Activated T-helper 1 cell treated with anti-CD3 and anti-CD28 coated beads, Interleukin-12 subunit alpha, Interleukin-12 subunit beta, Interleukin-2, Interleukin-4 antibody, amounts not matched to agents 30 ng/mL and 10 ng/mL and 1 ng/mL, durations not matched to agents 14 hours and 24 hours and 36 hours (primary cell): ENCODE measurements at regions of chr22 and their contacts with region 1.

Region 1: DNA sequence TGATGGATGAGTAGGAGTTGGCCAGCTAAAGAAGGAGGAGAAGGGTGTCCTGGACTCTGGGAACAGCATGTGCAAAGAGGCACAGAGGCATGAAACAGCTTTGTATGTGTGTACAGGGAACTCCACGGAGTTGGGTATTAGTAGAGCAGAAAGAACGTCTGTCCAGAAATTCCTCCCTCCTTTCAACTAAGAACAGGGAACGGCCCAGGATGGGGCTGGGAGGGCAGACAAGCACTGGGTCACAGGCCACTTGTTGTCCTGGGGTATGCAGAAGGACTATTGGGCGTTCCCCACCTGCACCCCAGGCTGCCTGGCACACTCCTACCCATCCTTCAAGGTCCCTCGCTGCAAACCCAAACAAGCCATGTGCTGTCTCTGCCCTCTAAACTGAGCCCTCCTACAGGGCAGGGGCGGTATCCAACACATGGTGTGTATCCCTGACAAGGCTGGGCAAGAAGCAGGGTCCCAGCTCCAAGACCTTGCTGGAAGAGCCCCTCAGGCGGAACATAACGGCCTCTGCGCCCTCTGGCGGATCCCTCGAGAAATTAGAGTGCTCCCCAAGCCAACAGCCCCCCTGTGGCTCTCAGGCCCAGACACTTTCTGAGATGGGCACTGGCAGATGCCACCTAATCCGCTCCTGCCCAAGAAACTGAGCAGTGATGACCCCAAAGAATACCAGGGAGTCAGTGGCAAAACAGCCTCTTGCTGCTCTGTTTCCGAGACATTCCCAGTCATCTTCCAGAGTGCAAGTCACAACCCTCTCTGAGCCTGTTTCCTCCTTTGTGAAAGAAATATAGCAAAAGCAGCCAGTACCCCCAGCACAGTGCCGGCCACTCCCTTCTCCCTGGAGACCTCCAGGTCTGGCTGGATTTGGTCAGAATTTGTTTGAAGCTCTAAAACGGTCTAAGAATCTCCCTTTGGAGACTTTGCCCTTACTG is 1.6 kb upstream of the ELFN2 start:
- DNase-seq: peak; percentile 28
- H3K4me3 Mint-ChIP-seq: no peak overlapping the region
- H3K27ac Mint-ChIP-seq: no peak overlapping the region
- H3K4me1 Mint-ChIP-seq: peaks cover 24% of the 10 kb centered on the region
- H3K27me3 Mint-ChIP-seq: peaks cover 42% of the 10 kb centered on the region

Region 2: DNA sequence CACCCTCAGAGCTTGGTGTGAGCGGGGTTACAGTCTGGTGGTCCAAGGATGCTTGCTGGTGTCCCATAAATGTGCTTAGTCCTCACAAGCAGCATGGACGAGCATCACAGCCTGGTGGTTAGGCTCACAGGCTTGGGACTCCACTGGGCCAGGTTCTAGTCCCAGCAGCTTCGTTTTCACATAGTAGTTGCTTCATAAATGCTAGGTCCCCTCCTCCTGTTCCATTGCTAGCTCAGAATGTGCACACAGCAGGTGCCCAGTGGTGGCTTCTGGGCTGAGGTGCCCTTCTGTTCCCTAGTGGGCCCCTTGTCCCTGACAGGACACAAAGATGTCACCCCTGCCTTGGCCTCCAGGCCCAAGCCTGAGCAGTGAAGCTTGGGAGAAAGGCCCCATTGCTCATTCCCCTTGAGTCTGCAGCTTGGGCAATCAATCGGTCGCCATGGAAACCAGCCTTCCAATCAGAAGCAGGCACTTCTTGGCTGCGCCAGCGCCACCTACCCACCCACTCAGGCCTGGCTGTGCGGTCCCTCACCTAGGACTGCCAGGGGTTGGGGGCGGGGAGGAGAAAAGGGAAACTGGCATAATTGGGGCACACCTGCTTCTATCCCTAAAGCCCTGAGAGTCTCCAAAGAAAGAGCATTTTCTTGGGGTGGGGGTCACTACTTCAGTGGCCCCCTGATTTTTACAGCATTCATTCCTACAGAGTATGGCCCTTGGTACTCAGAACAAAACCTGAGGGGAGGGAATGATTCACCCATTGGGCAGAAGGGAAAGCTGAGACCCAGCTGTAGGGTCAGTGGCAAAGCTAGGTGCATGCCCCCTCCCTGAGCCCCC is 98.5 kb before region 1 on chr22:
- intact Hi-C with region 1: loop called (anchors 5 kb)
- DNase-seq: no peak
- H3K4me3 Mint-ChIP-seq: no peak overlapping the region
- H3K27ac Mint-ChIP-seq: no peak overlapping the region
- H3K4me1 Mint-ChIP-seq: peaks cover 4% of the 10 kb centered on the region
- H3K27me3 Mint-ChIP-seq: peaks cover 63% of the 10 kb centered on the region

Region 3: DNA sequence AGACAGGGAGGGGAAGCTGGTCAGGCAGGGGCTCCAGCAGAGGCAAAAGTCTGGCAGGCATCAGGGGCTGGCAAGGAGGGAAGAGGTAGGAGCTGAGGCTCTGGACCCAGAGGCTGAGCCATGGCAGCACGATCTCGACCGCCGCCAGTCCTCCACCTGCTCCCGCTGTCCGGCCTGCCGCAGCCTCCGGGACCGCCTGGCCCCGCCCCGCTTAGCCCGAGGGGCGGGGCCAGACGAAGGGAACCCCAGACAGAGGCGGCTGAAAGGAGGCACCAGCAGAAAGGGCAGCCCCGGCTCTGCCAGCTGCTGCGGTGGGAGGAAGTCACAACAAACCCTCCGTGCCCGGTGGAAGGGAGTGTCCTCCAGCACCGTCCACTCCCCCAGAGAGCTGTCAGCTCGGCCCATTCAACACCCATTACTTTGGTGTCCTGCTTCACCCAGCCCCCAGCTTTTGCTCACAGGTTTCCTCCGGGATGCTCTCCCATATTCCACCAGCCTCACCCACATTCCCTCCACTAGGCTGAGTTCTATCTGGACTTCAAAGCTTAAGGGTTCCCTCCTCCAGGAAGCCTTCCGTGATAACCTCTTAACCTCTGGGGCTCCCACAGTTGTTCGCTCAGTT is 57.4 kb after region 1 on chr22 and contains the start of gene MFNG:
- intact Hi-C with region 1: loop called (anchors 1 kb)
- DNase-seq: peak; percentile 69
- H3K4me3 Mint-ChIP-seq: peak within 1 kb of the TSS; percentile 92
- H3K27ac Mint-ChIP-seq: peak within 1 kb of the TSS; percentile 93
- H3K4me1 Mint-ChIP-seq: peaks cover 44% of the 10 kb centered on the region
- H3K27me3 Mint-ChIP-seq: no peaks in the 10 kb centered on the region
- total RNA-seq, gene MFNG: 213 and 214 TPM in 2 replicates